ENCODE measurements at regions of chr10 and their contacts with region 1.

Region 1: GRCh38 chr10:96978621-96979154 is 146.6 kb downstream of the LCOR start:
- DNase-seq: no peak
- H3K4me3 Mint-ChIP-seq: peak overlapping the region; percentile 62
- H3K27ac Mint-ChIP-seq: peak overlapping the region; percentile 88
- H3K4me1 Mint-ChIP-seq: peaks cover 25% of the 10 kb centered on the region
- H3K27me3 Mint-ChIP-seq: no peaks in the 10 kb centered on the region

Region 2: GRCh38 chr10:96896884-96897589 is 81.7 kb before region 1 on chr10:
- intact Hi-C with region 1: loop called (anchors 2 kb)
- DNase-seq: no peak
- H3K4me3 Mint-ChIP-seq: no peak overlapping the region
- H3K27ac Mint-ChIP-seq: peak overlapping the region; percentile 40
- H3K4me1 Mint-ChIP-seq: peaks cover 53% of the 10 kb centered on the region
- H3K27me3 Mint-ChIP-seq: no peaks in the 10 kb centered on the region

Region 3: GRCh38 chr10:96991313-96991841 is 12.7 kb after region 1 on chr10:
- intact Hi-C with region 1: loop called (anchors 1 kb)
- DNase-seq: no peak
- H3K4me3 Mint-ChIP-seq: no peak overlapping the region
- H3K27ac Mint-ChIP-seq: no peak overlapping the region
- H3K4me1 Mint-ChIP-seq: peaks cover 9% of the 10 kb centered on the region
- H3K27me3 Mint-ChIP-seq: peaks cover 2% of the 10 kb centered on the region

Region 4: GRCh38 chr10:97334370-97335175 is 355.9 kb after region 1 on chr10 and contains the start of gene FRAT2:
- intact Hi-C with region 1: loop called (anchors 10 kb)
- DNase-seq: peak; percentile 83
- H3K4me3 Mint-ChIP-seq: peak within 1 kb of the TSS; percentile 86
- H3K27ac Mint-ChIP-seq: peak within 1 kb of the TSS; percentile 75
- H3K4me1 Mint-ChIP-seq: peaks cover 34% of the 10 kb centered on the region
- H3K27me3 Mint-ChIP-seq: peaks cover 24% of the 10 kb centered on the region
- total RNA-seq, gene FRAT2: 10.8 and 11.2 TPM in 2 replicates

Measured in activated T-helper 1 cell treated with anti-CD3 and anti-CD28 coated beads, Interleukin-12 subunit alpha, Interleukin-12 subunit beta, Interleukin-2, Interleukin-4 antibody, amounts not matched to agents 30 ng/mL and 10 ng/mL and 1 ng/mL, durations not matched to agents 14 hours and 24 hours and 36 hours (primary cell).